ENCODE measurements at regions of chr22 and their contacts with region 1.

Region 1: DNA sequence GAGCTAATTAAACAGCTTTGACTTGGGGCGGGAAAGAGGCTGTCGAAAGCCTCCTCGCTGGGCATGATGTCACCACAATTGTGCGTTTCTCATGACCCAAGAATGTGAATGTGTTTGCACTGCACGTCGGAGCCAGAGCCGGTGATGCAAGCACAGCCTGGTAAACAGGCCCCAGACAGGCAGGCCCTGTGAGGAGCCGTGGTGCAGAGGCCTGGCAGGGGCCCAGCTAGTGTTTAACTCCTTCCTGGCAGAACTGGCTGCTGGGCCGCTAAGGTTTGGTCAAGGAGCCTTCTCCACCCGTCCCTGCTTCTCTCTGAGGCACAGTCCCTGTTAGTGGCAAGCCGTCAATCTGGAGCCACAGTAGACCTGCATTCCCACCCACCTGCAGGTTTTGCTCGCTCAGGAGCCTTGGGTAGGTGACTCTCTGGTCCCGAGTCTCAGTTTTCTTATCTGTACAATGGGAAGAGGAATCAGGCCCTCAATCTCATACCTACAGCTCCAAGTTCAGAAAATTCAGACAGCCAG is 25.4 kb upstream of the SMTN start:
- DNase-seq: peak; percentile 99
- H3K4me3 ChIP-seq: no peak overlapping the region
- H3K27ac ChIP-seq: peak overlapping the region; percentile 89 to 97 (median 90)
- H3K4me1 ChIP-seq: peaks cover 0 to 53% (median 45%) of the 10 kb centered on the region in 4 donors
- H3K27me3 ChIP-seq: no peaks in the 10 kb centered on the region
- CTCF ChIP-seq: no peak
- EP300 ChIP-seq: peak; percentile 40 to 99 (median 79)
- POLR2A ChIP-seq: no peak

Region 2: DNA sequence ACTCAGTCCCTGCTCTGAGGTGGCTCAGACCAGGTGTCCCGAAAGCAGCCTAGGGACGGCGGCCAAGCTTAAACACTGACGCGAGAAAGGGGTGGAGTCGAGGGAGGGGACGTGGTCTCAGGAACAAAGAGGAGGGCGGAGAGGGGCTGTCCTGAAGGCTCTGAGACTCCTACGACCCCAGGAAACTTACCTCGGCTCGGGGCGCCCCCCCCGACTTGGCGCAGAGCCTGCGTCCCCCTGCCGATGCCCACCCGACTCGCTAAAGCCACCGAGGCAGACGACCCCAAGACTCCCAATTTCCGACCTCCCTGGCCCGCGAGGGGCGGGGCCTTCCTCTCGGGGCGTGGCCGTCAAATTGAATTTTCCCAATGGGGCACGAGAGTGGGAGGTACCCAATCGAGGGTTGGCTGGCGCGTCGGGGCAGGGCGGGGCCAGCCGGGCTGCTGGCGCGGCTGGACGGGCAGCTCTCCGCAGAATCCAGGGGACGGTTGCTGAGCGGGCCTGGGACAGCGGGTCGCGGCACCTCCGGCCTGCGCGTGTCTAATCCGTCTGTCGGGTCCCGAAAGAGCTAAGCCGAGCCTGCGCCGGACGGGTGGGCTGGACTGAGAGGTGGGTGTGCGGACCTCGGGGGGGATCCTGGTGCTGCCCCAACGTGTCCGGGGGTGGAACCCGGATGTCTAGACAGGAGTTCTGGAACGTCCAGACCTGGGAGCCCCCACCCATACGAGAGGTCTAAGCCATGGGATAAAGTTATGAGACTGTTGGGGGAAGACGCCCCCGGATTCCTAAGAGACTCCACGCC is 25.4 kb after region 1 on chr22 and contains the start of gene SMTN:
- intact Hi-C with region 1: loop called (anchors 1 kb)
- DNase-seq: peak; percentile 97
- H3K4me3 ChIP-seq: peak within 1 kb of the TSS; percentile 67 to 82 (median 80)
- H3K27ac ChIP-seq: peak within 1 kb of the TSS; percentile 96 to 100 (median 99)
- H3K4me1 ChIP-seq: peaks cover 0 to 51% (median 50%) of the 10 kb centered on the region in 4 donors
- H3K27me3 ChIP-seq: no peaks in the 10 kb centered on the region
- CTCF ChIP-seq: no peak
- EP300 ChIP-seq: no peak
- POLR2A ChIP-seq: peak; percentile 97
- total RNA-seq, gene SMTN: 987 to 1,789 (median 1,228) TPM